ENCODE measurements at regions of chr10 and their contacts with region 1.

Region 1: DNA sequence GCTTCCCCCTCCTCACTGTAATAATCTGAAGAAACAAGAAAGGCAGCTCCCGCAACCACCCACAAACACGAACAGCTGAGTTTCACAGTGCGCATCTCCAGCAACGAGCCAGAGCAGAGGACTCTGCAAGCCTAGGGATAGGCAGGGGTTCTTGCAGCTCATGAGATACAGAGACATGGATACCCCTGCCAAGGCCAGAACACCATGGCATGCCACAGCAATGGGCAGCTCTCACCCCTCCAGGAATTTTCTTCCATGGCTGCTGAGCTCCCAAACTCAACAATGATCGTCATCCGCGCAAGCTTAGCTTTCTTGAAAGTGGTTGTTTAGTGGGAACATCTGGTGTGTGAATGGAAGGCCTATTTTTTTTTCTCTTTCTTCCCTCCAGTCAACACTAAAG is 637.3 kb downstream of the SORCS3 start:
- DNase-seq: no peak
- H3K4me3 Mint-ChIP-seq: no peak overlapping the region
- H3K27ac Mint-ChIP-seq: no peak overlapping the region
- H3K4me1 Mint-ChIP-seq: peaks cover 15% of the 10 kb centered on the region
- H3K27me3 Mint-ChIP-seq: peaks cover 5% of the 10 kb centered on the region

Region 2: DNA sequence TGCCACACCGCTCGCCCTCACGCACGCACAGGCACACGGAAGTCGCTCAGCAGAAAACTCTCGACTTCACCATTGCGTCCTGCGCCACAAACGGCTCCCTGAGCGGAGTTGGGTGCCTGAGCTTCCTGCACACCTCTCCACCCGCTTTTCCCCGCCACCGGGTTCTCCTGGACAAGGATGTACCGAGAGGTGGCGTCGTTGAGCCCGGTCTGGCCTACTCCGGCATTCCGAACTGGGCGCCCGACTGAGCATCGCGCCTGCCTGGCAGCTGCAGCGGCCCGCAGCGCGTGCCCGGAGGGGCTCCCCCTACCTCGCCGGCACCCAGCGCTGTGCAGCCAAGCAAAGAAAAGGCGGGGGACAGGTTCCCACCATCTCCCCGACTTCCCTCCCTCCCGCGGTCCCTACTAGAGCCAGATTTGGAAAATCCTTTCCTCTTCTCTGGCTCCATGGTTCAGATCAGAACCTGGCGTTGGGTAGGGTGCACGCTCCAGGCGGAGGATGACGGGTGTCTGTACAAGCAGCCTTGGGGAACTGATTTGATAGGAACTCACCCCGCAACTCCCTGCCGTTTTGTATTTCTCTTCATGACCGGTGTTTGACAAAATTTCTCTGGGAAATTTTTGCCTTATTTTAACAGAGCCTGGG is 635.7 kb before region 1 on chr10:
- CTCF ChIA-PET with region 1: no interaction called
- intact Hi-C with region 1: loop called (anchors 10 kb)
- DNase-seq: peak; percentile 65
- H3K4me3 Mint-ChIP-seq: peak overlapping the region; percentile 7
- H3K27ac Mint-ChIP-seq: no peak overlapping the region
- H3K4me1 Mint-ChIP-seq: peaks cover 13% of the 10 kb centered on the region
- H3K27me3 Mint-ChIP-seq: peaks cover 66% of the 10 kb centered on the region

Region 3: GRCh38 chr10:105017116-105017515 is 261.3 kb before region 1 on chr10:
- CTCF ChIA-PET with region 1: no interaction called
- intact Hi-C with region 1: loop called (anchors 1 kb)
- DNase-seq: peak; percentile 66
- H3K4me3 Mint-ChIP-seq: no peak overlapping the region
- H3K27ac Mint-ChIP-seq: no peak overlapping the region
- H3K4me1 Mint-ChIP-seq: peaks cover 32% of the 10 kb centered on the region
- H3K27me3 Mint-ChIP-seq: no peaks in the 10 kb centered on the region

Region 4: DNA sequence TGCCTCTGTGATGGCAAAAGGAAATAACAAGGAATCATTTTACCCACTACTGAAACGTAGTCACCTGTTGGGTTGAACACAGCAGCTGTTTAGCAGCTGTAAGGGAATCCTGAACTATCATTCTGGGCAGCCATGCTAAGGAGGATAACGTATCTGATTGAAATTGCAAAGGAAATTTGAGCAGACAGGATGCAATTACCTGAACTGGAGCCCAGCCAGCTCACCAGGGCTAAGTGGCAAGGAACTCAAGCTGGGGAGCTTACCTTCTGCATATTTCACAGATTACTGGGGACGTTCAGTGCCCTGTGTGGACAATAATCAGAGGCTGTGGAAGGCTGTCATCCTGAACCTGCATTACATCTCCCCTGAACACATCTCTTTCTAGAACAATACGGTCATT is 13.1 kb after region 1 on chr10:
- CTCF ChIA-PET with region 1: no interaction called
- intact Hi-C with region 1: loop called (anchors 1 kb)
- DNase-seq: no peak
- H3K4me3 Mint-ChIP-seq: no peak overlapping the region
- H3K27ac Mint-ChIP-seq: no peak overlapping the region
- H3K4me1 Mint-ChIP-seq: peaks cover 7% of the 10 kb centered on the region
- H3K27me3 Mint-ChIP-seq: no peaks in the 10 kb centered on the region